ENCODE measurements at regions of chr16 and their contacts with region 1.

Region 1: DNA sequence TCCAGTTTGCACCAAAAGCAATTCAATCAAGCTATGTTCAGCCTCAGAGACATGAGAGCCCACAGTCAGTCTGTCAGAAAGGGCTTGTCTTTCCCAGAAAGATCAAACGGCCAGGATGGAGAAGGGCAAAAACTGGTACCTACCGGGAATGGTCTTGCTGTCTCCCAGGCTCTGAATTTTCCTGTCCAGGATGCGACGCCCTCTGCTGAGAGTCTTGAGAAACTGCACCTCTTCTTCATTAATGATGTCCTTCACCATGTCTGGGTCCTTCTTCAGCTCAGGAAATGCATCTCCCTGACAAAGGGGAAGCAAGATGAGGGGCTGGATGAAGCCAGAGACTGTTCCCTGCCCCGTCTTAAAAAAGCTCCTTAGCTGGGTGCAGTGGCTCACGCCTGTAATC is 15.8 kb upstream of the EXOSC6 start:
- DNase-seq: peak; percentile 57 to 68 (median 58)
- H3K4me3 ChIP-seq: no peak overlapping the region
- H3K27ac ChIP-seq: no peak overlapping the region
- H3K4me1 ChIP-seq: no peaks in the 10 kb centered on the region
- H3K27me3 ChIP-seq: no peaks in the 10 kb centered on the region

Region 2: DNA sequence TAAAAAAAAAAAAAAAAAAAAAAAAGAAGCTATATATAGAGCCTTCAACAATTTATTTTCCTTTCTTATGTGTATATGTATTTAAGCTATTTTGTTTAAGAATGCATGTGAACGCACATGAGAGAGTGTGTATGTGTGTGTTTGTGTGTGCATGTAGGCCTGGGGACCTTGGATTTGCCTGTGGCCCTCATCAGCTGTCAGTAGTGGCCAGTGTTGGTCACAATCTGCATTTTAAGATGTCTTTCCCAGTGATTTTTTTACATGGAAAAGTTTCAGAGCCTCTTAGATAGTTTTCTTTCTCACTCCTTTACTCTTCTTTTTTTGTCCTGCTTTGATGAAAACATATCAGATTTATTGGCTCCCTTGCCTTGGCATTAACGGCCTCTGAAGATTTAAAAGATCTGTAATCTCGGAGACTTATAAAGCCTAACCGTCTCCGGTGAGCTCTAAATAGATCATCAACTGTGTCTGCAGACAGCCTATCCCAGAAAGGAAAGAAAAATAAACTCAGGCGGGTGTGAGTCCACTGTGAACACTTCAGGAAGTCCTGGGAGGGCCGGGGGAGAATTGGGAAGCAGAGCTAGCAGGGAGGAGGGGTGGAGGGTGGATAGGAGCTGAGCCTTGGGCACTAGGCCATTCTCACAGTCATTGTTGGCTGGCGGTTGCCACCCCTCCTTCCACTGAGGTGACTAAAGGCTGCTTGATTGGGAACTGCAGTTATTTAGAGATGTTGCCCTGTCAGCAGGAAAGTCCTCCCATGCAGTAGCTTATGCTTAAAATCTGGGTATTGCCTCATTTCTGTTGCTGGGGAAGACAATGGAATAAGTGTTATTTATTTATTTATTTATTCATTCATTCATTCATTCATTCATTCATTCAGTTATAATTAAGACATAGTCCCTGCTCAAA is 418.6 kb before region 1 on chr16:
- CTCF ChIA-PET with region 1: no interaction called
- POLR2A ChIA-PET with region 1: no interaction called
- DNase-seq: peak in 2 of 3 donors; percentile 33 to 45
- H3K4me3 ChIP-seq: no peak overlapping the region
- H3K27ac ChIP-seq: no peak overlapping the region
- H3K4me1 ChIP-seq: peaks cover 0 to 7% (median 1%) of the 10 kb centered on the region in 4 experiments
- H3K27me3 ChIP-seq: no peaks in the 10 kb centered on the region

Region 3: DNA sequence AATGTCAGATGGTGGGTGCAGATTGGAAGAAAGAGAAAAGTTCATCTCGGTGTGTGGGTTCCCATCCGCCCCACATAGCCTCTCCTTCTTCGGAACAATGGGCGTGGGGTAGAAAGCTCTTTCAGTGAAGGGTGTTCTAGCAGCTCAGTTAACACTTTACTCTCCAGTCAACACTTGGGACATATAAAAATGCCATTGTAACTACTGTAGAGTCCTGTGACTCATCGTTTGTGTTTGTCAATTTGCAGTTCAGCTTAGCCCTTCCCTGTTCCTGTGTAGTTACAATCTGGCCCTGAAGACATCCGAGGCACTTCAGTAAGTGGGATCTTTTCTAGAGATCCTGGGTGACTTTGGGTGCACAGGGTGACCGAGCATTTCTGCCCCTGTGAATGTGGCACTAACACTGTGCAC is 105.5 kb before region 1 on chr16:
- CTCF ChIA-PET with region 1: interaction called, 11 read pairs
- POLR2A ChIA-PET with region 1: no interaction called
- DNase-seq: no peak
- H3K4me3 ChIP-seq: no peak overlapping the region
- H3K27ac ChIP-seq: no peak overlapping the region
- H3K4me1 ChIP-seq: peaks cover 0 to 2% (median 0%) of the 10 kb centered on the region in 4 experiments
- H3K27me3 ChIP-seq: no peaks in the 10 kb centered on the region

Region 4: GRCh38 chr16:70251629-70252354 is 15.7 kb before region 1 on chr16 and contains the start of gene EXOSC6:
- CTCF ChIA-PET with region 1: interaction called, 19 read pairs
- POLR2A ChIA-PET with region 1: no interaction called
- DNase-seq: peak; percentile 93 to 97 (median 97)
- H3K4me3 ChIP-seq: peak within 1 kb of the TSS; percentile 70 to 84 (median 80)
- H3K27ac ChIP-seq: peak within 1 kb of the TSS; percentile 81 to 86
- H3K4me1 ChIP-seq: peaks cover 0 to 15% (median 9%) of the 10 kb centered on the region in 4 experiments
- H3K27me3 ChIP-seq: no peaks in the 10 kb centered on the region

Region 5: GRCh38 chr16:70407811-70408274 is 140.3 kb after region 1 on chr16:
- CTCF ChIA-PET with region 1: no interaction called
- POLR2A ChIA-PET with region 1: no interaction called
- DNase-seq: no peak
- H3K4me3 ChIP-seq: no peak overlapping the region
- H3K27ac ChIP-seq: no peak overlapping the region
- H3K4me1 ChIP-seq: peaks cover 5 to 51% (median 32%) of the 10 kb centered on the region in 4 experiments
- H3K27me3 ChIP-seq: no peaks in the 10 kb centered on the region